ENCODE measurements at regions of chr2 and their contacts with region 1.

Region 1: GRCh38 chr2:105789745-105790460 is 45.2 kb downstream of the NCK2 start:
- DNase-seq: no peak

Region 2: GRCh38 chr2:105750735-105751134 is 39.2 kb before region 1 on chr2:
- intact Hi-C with region 1: loop called in 1 of 2 experiments (anchors 1 kb)
- DNase-seq: no peak

Region 3: GRCh38 chr2:105836840-105837692 is 47.2 kb after region 1 on chr2:
- intact Hi-C with region 1: loop called in 1 of 2 experiments (anchors 1 kb)
- DNase-seq: no peak

Region 4: DNA sequence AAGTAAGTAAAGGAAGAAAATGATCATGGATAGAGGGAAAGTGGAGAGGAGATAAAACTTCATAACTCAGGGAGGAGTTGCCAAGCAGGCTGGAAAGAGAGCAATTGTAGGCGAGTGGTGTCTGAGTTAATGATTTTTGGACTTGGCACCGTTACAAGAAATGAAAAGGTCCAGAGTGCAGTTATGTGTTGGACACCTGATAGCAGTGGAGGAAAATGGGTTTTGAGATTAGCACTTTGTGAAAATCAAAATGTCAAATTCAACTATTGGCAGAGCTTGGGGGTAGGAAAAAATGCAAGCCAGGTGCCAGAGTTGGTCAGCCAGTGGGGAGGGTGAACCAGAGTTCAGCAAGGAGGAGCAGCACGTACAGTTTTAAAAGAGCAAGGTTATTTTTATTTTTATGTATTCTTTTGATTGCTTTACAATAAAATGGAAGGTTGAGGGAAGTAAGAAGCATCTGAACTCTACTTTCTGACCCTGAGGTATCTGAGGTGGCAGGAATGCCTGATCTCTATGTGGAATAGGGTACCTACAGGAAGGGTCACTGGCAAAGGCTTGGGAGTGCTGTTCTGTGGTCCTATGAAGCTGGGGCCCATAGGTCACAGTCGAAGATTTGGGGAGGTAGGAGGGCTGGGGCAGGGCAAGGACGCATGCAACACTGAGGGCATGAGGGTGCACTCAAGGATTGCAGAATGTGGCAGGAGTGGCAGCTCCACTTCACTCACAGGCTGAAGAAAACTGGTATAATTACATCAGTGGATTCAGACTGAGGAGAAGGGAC is 824.8 kb after region 1 on chr2:
- intact Hi-C with region 1: no loop called
- DNase-seq: no peak

Measured in posterior vena cava (tissue), 2 donors.